Activated CD4-positive, alpha-beta memory T cell treated with anti-CD3 and anti-CD28 coated beads, Interleukin-2, amount 10 ng/mL, durations not matched to agents 7 days and 5 days (primary cell): ENCODE measurements at regions of chr2 and their contacts with region 1.

Region 1: GRCh38 chr2:204177977-204178540 is 241.5 kb downstream of the ICOS start:
- DNase-seq: peak; percentile 75
- H3K4me3 Mint-ChIP-seq: no peak overlapping the region
- H3K27ac Mint-ChIP-seq: no peak overlapping the region
- H3K4me1 Mint-ChIP-seq: peaks cover 3% of the 10 kb centered on the region
- H3K27me3 Mint-ChIP-seq: peaks cover 18% of the 10 kb centered on the region

Region 2: GRCh38 chr2:204072443-204073324 is 105.4 kb before region 1 on chr2:
- CTCF ChIA-PET with region 1: interaction called, 30 read pairs
- POLR2A ChIA-PET with region 1: no interaction called
- DNase-seq: peak; percentile 73
- H3K4me3 Mint-ChIP-seq: no peak overlapping the region
- H3K27ac Mint-ChIP-seq: no peak overlapping the region
- H3K4me1 Mint-ChIP-seq: peaks cover 2% of the 10 kb centered on the region
- H3K27me3 Mint-ChIP-seq: peaks cover 3% of the 10 kb centered on the region

Region 3: DNA sequence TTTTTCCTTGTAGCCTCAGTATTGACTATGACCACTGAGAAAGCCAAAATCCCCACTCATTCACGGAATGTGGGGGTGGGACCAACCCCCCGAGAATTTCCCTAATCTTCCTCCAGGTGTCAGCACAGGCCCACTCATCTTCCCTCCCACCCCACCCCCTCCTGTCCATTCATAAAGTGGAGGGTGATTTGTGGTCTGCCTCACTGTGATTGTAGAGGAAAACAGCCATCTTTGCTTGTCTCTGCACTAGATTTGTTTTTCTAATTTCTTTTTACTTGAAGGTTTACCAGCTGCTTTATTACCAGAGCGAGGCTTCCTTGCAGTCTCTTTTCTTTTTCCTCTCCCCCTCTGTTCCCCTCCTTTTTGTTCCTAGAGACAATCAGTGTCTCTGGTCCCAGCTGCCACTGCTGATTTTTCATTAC is 69.7 kb before region 1 on chr2:
- CTCF ChIA-PET with region 1: interaction called, 80 read pairs
- POLR2A ChIA-PET with region 1: interaction called, 3 read pairs
- DNase-seq: peak; percentile 64
- H3K4me3 Mint-ChIP-seq: peak overlapping the region; percentile 64
- H3K27ac Mint-ChIP-seq: peak overlapping the region; percentile 80
- H3K4me1 Mint-ChIP-seq: peaks cover 78% of the 10 kb centered on the region
- H3K27me3 Mint-ChIP-seq: peaks cover 6% of the 10 kb centered on the region

Region 4: DNA sequence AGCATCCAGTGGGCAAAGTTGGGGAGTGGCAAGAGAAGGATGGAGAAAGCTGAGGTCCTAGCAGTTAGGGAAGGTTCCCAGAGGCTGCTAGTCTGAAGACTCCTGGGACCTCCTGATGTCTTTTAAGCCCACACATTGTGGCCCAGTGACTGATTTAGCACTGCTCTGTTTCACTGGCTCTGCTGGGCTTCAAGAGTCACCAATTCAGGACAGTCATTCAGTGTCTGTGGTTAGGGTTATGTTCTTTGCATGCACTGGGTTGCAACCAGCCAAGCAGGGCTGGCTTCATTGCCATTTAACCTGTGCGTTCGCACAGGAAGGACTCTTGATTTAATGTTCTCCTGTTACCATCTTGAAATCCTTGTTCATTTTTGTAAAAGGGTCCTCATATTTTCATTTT is 42.3 kb before region 1 on chr2:
- CTCF ChIA-PET with region 1: interaction called, 19 read pairs
- POLR2A ChIA-PET with region 1: interaction called, 3 read pairs
- DNase-seq: no peak
- H3K4me3 Mint-ChIP-seq: no peak overlapping the region
- H3K27ac Mint-ChIP-seq: no peak overlapping the region
- H3K4me1 Mint-ChIP-seq: no peaks in the 10 kb centered on the region
- H3K27me3 Mint-ChIP-seq: peaks cover 13% of the 10 kb centered on the region

Region 5: DNA sequence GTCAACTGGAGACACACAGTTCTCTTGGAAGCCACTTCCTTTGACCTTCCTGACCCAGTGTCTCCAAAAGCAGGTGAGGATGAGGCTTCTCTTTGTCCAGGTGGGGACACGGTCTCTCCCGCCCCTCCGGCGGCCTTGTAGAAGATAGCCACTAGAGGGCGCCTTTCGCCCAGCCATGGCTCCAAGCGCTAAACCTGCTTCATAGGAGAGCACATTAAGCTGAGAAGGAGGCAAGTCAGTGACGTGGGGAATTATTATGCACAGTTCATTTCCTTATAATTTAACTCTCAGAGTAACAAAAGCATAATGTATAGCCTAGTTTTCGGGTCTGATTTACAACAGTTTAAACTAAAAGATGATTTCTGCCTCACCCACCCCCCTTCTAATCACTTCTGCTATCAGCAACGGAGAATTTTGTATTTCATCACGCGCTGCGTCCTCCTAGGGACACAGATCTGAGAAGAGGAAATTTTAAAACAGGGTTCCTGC is 32.8 kb before region 1 on chr2:
- CTCF ChIA-PET with region 1: interaction called, 62 read pairs
- POLR2A ChIA-PET with region 1: interaction called, 6 read pairs
- DNase-seq: peak; percentile 84
- H3K4me3 Mint-ChIP-seq: peak overlapping the region; percentile 75
- H3K27ac Mint-ChIP-seq: no peak overlapping the region
- H3K4me1 Mint-ChIP-seq: peaks cover 14% of the 10 kb centered on the region
- H3K27me3 Mint-ChIP-seq: peaks cover 24% of the 10 kb centered on the region

Region 6: GRCh38 chr2:204159526-204159925 is 18.5 kb before region 1 on chr2:
- CTCF ChIA-PET with region 1: interaction called, 25 read pairs
- POLR2A ChIA-PET with region 1: no interaction called
- DNase-seq: no peak
- H3K4me3 Mint-ChIP-seq: no peak overlapping the region
- H3K27ac Mint-ChIP-seq: no peak overlapping the region
- H3K4me1 Mint-ChIP-seq: no peaks in the 10 kb centered on the region
- H3K27me3 Mint-ChIP-seq: peaks cover 12% of the 10 kb centered on the region

Region 7: DNA sequence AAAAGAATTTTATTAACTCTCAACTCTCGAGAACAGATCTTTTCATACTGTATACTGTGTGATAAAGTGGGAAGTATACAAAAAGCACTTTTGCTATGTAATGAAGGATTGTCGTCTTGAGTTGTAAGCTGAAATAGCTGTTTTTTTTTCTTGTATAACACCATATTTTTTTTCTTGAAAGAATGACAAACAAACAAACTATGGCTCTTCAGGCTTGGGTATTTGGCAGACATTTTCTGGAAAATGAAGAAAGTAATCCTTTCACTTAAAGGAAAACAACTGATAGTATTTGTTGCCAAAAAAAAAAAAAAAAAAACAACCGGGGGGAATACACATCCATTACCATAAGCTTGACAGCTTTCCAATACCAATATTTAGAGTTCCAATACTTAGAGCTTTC is 11.1 kb before region 1 on chr2:
- CTCF ChIA-PET with region 1: interaction called, 25 read pairs
- POLR2A ChIA-PET with region 1: no interaction called
- DNase-seq: no peak
- H3K4me3 Mint-ChIP-seq: no peak overlapping the region
- H3K27ac Mint-ChIP-seq: no peak overlapping the region
- H3K4me1 Mint-ChIP-seq: no peaks in the 10 kb centered on the region
- H3K27me3 Mint-ChIP-seq: peaks cover 6% of the 10 kb centered on the region

Region 8: DNA sequence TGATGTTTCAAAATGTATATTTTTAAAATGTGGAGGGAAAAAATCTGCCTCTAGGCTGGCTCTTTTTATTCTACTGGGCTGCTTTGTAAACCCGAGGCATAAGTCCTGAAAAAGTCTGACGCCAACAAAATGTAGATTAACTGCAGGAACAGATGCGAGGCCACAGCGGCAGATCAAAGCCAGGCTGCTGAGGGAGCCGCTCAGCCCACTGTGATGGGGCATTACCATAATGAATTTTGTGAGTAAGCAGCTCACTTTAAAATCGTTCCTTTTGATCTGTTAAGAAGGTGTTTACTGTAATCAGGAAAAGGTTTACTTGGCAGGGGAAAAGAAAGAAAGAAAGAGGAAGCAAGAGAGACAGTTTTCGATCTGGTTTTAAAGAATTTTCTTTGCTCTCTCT is 27.5 kb after region 1 on chr2:
- CTCF ChIA-PET with region 1: no interaction called
- POLR2A ChIA-PET with region 1: no interaction called
- DNase-seq: no peak
- H3K4me3 Mint-ChIP-seq: no peak overlapping the region
- H3K27ac Mint-ChIP-seq: no peak overlapping the region
- H3K4me1 Mint-ChIP-seq: no peaks in the 10 kb centered on the region
- H3K27me3 Mint-ChIP-seq: peaks cover 28% of the 10 kb centered on the region